Cardiac septum (tissue), 1 donor: ENCODE measurements at regions of chr1 and their contacts with region 1.

Region 1: DNA sequence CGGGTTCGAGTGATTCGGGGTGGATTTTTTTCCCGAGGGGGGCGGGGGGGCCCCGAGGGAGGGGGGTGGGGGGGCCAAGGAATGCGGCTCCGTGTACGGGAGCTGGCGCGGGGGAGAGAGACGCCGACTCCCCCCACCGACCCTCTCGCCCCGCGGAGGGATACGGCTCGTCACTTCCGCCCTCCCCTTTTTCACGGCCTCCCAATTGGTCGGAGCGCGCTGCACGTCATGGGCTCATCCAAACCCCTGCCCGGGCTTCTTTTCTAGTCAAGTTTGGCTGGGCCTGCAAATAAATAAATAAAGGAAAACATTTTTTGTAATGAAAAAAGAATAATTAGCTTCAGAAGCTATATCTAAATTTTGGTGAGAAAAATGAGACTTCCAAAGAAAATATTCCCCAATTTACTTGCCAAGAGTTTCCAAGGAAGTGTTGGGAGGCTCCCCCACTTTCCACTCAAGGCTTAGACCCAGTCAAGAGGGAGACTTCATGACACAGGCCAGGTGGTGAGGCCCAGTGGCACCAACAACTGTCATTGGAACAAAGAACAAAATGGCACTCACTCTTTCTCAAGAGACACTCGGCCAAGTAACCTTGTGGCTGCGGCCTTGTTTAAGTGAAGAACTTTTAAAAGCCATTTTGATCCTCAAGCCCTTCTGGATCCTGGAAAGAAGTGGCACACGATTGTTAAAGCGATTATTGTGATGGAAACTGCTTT is at the start of gene POGZ:
- DNase-seq: peak; percentile 97
- total RNA-seq, gene POGZ: 54.4 TPM

Region 2: GRCh38 chr1:151472856-151473731 is 13.6 kb after region 1 on chr1:
- intact Hi-C with region 1: loop called (anchors 1 kb)
- DNase-seq: peak; percentile 76

Region 3: GRCh38 chr1:151539990-151540981 is 80.8 kb after region 1 on chr1 and contains the start of gene TUFT1:
- intact Hi-C with region 1: loop called (anchors 5 kb)
- DNase-seq: peak; percentile 95
- total RNA-seq, gene TUFT1: 4.3 TPM

Region 4: DNA sequence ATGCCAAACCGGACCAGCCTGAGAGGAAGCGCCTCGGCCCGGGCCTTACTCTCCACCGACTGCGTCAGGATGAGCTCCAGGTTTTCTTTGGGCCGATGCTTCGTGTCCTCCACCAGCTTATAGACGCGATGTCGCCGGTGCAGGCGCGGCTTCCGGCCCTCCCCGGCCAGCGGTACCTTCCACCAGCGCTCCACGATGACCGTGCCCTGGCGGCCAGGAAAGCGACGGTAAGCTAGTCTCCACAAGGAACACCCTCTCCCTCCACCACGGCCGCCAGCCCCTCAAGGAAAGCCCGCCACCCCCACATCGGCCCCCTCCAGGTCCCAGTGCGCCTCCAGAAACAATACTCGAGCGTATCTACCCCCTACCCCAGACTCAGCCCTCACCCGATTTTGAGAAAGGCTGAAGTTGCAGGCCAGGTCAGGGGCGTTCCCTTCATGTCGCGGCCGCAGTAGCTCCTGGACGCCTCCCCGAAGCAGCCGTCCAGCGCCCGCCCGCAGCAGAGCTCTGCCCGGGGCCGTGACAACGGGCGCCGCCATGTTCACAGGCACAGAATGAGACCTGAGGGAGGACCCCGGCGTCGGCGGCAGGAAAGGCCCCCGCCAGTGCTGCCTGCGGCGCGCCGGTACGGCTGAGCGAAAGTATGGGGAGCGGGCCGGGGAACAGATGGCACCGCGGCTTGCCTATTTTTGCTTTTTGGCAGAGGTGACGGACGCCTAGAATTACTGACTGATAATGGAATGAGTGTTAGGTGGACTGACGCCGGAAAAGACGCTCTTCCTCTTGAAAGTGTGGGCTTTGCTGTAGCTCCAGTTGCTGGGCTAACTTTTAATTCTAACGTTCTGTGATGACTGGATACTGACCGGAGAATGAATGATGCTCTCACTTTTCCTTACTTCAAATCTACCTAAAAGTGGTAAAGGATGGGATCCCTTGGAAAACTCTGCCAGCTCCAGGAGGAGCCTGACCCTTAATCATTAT is 303.7 kb after region 1 on chr1 and contains the start of gene MRPL9:
- intact Hi-C with region 1: no loop called
- DNase-seq: peak; percentile 92
- total RNA-seq, gene MRPL9: 43.2 TPM